CD4-positive, alpha-beta T cell (primary cell): ENCODE measurements at regions of chr14 and their contacts with region 1.

Region 1: GRCh38 chr14:78598041-78598920 is 428.1 kb downstream of the NRXN3 start:
- DNase-seq: peak in 12 of 14 experiments; percentile 1 to 56 (median 8)
- ATAC-seq: no peak
- H3K4me3 ChIP-seq: no peak overlapping the region
- H3K4me3 Mint-ChIP-seq: no peak overlapping the region
- H3K27ac ChIP-seq: no peak overlapping the region
- H3K27ac Mint-ChIP-seq: no peak overlapping the region
- H3K4me1 ChIP-seq: no peaks in the 10 kb centered on the region
- H3K4me1 Mint-ChIP-seq: no peaks in the 10 kb centered on the region
- H3K27me3 ChIP-seq: peaks cover 0 to 4% of the 10 kb centered on the region in 2 experiments
- H3K27me3 Mint-ChIP-seq: peaks cover 26% of the 10 kb centered on the region
- CTCF ChIP-seq: peak; percentile 78

Region 2: GRCh38 chr14:77151918-77152588 is 1446.2 kb before region 1 on chr14:
- CTCF ChIA-PET with region 1: no interaction called
- POLR2A ChIA-PET with region 1: no interaction called
- intact Hi-C with region 1: loop called in 1 of 2 experiments (anchors 10 kb)
- DNase-seq: peak in 3 of 14 experiments; percentile 22 to 42 (median 23)
- ATAC-seq: no peak
- H3K4me3 ChIP-seq: no peak overlapping the region
- H3K4me3 Mint-ChIP-seq: no peak overlapping the region
- H3K27ac ChIP-seq: no peak overlapping the region
- H3K27ac Mint-ChIP-seq: no peak overlapping the region
- H3K4me1 ChIP-seq: no peaks in the 10 kb centered on the region
- H3K4me1 Mint-ChIP-seq: no peaks in the 10 kb centered on the region
- H3K27me3 ChIP-seq: peaks cover 14 to 43% of the 10 kb centered on the region in 2 experiments
- H3K27me3 Mint-ChIP-seq: peaks cover 59% of the 10 kb centered on the region
- CTCF ChIP-seq: no peak

Region 3: GRCh38 chr14:77301103-77301502 is 1297.2 kb before region 1 on chr14:
- CTCF ChIA-PET with region 1: no interaction called
- POLR2A ChIA-PET with region 1: no interaction called
- intact Hi-C with region 1: loop called in 1 of 2 experiments (anchors 5 kb)
- DNase-seq: peak; percentile 27 to 69 (median 40)
- ATAC-seq: peak; percentile 48
- H3K4me3 ChIP-seq: no peak overlapping the region
- H3K4me3 Mint-ChIP-seq: no peak overlapping the region
- H3K27ac ChIP-seq: no peak overlapping the region
- H3K27ac Mint-ChIP-seq: no peak overlapping the region
- H3K4me1 ChIP-seq: no peaks in the 10 kb centered on the region
- H3K4me1 Mint-ChIP-seq: no peaks in the 10 kb centered on the region
- H3K27me3 ChIP-seq: no peaks in the 10 kb centered on the region
- H3K27me3 Mint-ChIP-seq: no peaks in the 10 kb centered on the region
- CTCF ChIP-seq: peak; percentile 60

Region 4: DNA sequence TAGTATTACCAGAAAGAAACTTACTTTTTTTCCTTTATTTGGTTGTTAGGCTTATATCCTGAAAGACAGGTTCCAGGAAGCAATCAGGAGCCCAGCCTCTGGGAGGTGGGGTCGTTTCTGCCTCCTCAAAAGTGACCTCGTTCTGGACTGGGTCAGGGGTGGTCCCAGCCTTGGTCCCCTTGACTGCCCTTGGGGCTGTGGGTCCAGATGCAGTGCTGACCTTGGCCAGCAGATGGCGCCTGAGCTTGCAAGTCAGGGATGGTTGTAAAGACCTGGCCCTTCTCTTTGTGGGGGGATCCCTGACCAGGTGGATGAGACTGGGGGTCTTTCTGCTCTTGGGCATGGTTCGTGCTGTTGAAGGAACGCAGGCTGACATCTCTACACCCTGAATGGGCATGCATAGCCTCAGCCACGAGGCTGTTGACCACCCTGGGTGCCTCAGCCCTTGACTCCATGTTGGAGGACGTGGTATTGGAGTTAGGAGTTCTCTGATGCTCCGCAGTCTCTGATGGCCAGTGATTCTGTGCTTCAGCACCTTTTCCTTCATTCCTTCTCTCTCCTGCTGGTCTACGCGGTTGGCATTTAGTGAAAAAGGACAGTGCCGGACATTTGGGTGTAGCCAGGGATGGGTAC is 736.0 kb before region 1 on chr14:
- CTCF ChIA-PET with region 1: no interaction called
- POLR2A ChIA-PET with region 1: no interaction called
- intact Hi-C with region 1: loop called in 1 of 2 experiments (anchors 2 kb)
- DNase-seq: peak; percentile 56 to 81 (median 65)
- ATAC-seq: peak; percentile 37
- H3K4me3 ChIP-seq: no peak overlapping the region
- H3K4me3 Mint-ChIP-seq: no peak overlapping the region
- H3K27ac ChIP-seq: no peak overlapping the region
- H3K27ac Mint-ChIP-seq: no peak overlapping the region
- H3K4me1 ChIP-seq: no peaks in the 10 kb centered on the region
- H3K4me1 Mint-ChIP-seq: no peaks in the 10 kb centered on the region
- H3K27me3 ChIP-seq: no peaks in the 10 kb centered on the region
- H3K27me3 Mint-ChIP-seq: no peaks in the 10 kb centered on the region
- CTCF ChIP-seq: peak; percentile 97